CD4-positive, alpha-beta memory T cell (primary cell): ENCODE measurements at regions of chr10 and their contacts with region 1.

Region 1: DNA sequence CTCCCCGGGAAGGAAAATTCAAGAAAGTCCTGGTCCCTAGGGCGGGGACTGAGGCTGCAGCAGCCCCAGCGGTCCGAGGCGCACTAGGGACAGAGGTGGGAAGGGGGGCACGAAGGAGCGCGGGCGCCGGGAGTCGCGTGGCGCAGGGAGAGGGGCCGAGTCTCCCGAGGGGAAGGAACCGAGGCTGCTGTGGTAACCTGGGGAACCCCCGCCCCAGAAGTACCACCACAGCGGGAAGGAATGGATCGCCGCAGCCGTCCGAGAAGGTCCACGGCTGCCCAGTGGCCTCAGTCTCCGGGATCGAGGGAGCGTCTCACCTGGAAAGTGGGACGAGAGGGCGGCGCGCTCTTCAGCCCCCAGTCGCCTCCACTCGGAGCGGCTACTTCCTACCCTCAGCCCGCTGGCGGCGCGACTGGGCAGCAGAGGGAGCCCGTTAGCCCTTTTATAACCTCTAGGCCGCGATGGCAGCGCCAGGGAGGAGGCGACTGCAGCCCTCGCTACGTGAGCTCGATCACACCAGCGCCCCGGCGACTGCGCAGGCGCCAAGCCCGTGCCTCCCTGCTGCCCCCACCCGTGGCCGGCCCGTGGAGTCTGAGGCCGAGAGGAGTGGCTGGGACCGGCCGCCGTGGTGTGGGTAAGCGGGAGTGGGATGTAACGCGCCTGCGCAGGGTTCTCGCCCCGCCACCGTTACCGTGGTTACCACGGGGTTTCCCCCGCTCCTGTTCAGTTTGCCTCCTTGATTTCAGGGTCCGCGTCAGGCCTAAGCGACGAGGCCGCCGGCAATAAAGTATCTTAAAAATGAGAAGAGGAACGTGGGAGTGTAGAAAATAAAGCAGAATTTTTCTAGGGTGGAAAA is at the start of gene P4HA1:
- DNase-seq: peak; percentile 94 to 98 (median 95)
- H3K4me3 ChIP-seq: peak within 1 kb of the TSS; percentile 52 to 95
- H3K4me3 Mint-ChIP-seq: peak within 1 kb of the TSS; percentile 87 to 96 (median 94)
- H3K27ac ChIP-seq: peak within 1 kb of the TSS; percentile 87
- H3K27ac Mint-ChIP-seq: peak within 1 kb of the TSS; percentile 91 to 99 (median 96)
- H3K4me1 ChIP-seq: peaks cover 22% of the 10 kb centered on the region
- H3K4me1 Mint-ChIP-seq: peaks cover 13 to 53% (median 29%) of the 10 kb centered on the region in 4 donors
- H3K27me3 ChIP-seq: no peaks in the 10 kb centered on the region
- H3K27me3 Mint-ChIP-seq: no peaks in the 10 kb centered on the region
- total RNA-seq, gene P4HA1: 17.8 to 18.6 TPM

Region 2: DNA sequence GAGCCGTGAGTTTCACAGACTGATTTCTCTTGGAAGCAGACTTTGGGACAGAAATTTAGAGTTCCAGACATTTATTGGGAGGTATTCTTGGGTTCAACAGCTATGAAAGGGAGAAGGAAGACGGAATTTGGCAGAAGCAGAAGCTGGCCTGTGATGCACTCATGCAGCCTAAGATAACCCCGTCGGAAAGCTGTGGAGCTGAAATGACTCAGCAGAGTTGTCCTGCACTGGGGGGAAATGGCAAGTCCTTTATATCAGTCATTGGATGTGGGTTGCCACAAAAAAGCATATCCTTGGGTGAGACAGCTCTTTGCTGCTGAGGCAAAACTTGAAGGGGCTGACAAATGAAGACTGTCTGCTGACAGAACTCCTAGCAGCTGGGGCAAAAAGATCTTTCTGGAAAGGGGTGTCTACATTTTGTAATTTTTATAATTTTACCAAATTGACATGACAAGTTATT is 459.2 kb before region 1 on chr10:
- CTCF ChIA-PET with region 1: no interaction called
- POLR2A ChIA-PET with region 1: no interaction called
- intact Hi-C with region 1: no loop called
- DNase-seq: no peak
- H3K4me3 ChIP-seq: no peak overlapping the region
- H3K4me3 Mint-ChIP-seq: no peak overlapping the region
- H3K27ac ChIP-seq: no peak overlapping the region
- H3K27ac Mint-ChIP-seq: no peak overlapping the region
- H3K4me1 ChIP-seq: no peaks in the 10 kb centered on the region
- H3K4me1 Mint-ChIP-seq: no peaks in the 10 kb centered on the region
- H3K27me3 ChIP-seq: no peaks in the 10 kb centered on the region
- H3K27me3 Mint-ChIP-seq: peaks cover 3 to 7% of the 10 kb centered on the region in 2 donors

Region 3: DNA sequence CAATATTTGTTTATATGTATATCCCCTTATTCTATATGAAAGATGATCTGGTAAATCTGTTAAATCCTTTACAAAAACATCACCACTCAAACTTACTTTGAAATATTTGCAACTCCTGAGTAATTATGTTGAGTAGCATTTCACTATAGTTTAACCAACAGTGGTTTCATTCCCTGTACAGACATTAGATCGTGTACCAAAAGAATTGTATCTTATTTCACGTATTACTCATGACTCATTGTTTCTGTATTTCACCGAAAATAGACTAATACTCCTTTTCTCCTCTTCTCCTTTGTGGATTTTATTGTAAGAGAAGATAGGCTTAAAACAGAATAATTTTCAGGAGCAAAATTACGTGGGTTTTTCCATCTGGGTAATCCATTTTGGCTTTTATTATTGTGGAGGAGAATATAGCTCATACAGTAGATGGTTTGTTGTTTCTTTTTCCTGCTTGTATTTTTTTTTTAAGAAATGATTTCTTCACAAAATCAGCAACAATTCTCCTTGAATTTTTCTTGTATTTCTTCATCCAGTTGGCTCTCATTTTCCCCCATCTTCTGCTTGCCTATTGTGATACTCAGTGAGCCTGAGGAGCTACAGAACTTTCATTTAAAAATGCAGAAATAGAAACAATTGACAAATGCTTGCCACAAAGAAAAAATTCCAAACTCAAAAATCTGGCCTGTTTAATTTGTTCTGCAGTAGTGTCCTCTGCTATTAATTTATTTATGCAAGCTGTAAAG is 293.7 kb before region 1 on chr10:
- CTCF ChIA-PET with region 1: no interaction called
- POLR2A ChIA-PET with region 1: no interaction called
- intact Hi-C with region 1: no loop called
- DNase-seq: no peak
- H3K4me3 ChIP-seq: no peak overlapping the region
- H3K4me3 Mint-ChIP-seq: no peak overlapping the region
- H3K27ac ChIP-seq: no peak overlapping the region
- H3K27ac Mint-ChIP-seq: peak overlapping the region in 3 of 7 donors; percentile 20 to 67 (median 46)
- H3K4me1 ChIP-seq: peaks cover 16% of the 10 kb centered on the region
- H3K4me1 Mint-ChIP-seq: peaks cover 13 to 29% (median 16%) of the 10 kb centered on the region in 4 donors
- H3K27me3 ChIP-seq: no peaks in the 10 kb centered on the region
- H3K27me3 Mint-ChIP-seq: no peaks in the 10 kb centered on the region

Region 4: GRCh38 chr10:73110345-73110849 is 13.7 kb after region 1 on chr10 and contains the start of gene NUDT13:
- CTCF ChIA-PET with region 1: interaction called, 58 read pairs
- POLR2A ChIA-PET with region 1: interaction called, 51 read pairs
- intact Hi-C with region 1: loop called (anchors 1 kb)
- DNase-seq: peak; percentile 50 to 61 (median 54)
- H3K4me3 ChIP-seq: peak within 1 kb of the TSS; percentile 12 to 57
- H3K4me3 Mint-ChIP-seq: peak within 1 kb of the TSS; percentile 90 to 97 (median 93)
- H3K27ac ChIP-seq: peak within 1 kb of the TSS; percentile 43
- H3K27ac Mint-ChIP-seq: peak within 1 kb of the TSS; percentile 76 to 96 (median 91)
- H3K4me1 ChIP-seq: peaks cover 10% of the 10 kb centered on the region
- H3K4me1 Mint-ChIP-seq: peaks cover 4 to 15% (median 9%) of the 10 kb centered on the region in 4 donors
- H3K27me3 ChIP-seq: no peaks in the 10 kb centered on the region
- H3K27me3 Mint-ChIP-seq: no peaks in the 10 kb centered on the region
- total RNA-seq, gene NUDT13: 2.5 to 2.9 TPM

Region 5: GRCh38 chr10:73136627-73137026 is 40.0 kb after region 1 on chr10:
- CTCF ChIA-PET with region 1: interaction called, 37 read pairs
- POLR2A ChIA-PET with region 1: interaction called, 10 read pairs
- intact Hi-C with region 1: loop called (anchors 5 kb)
- DNase-seq: no peak
- H3K4me3 ChIP-seq: no peak overlapping the region
- H3K4me3 Mint-ChIP-seq: no peak overlapping the region
- H3K27ac ChIP-seq: no peak overlapping the region
- H3K27ac Mint-ChIP-seq: peak overlapping the region in 2 of 7 donors; percentile 4 to 60
- H3K4me1 ChIP-seq: no peaks in the 10 kb centered on the region
- H3K4me1 Mint-ChIP-seq: no peaks in the 10 kb centered on the region
- H3K27me3 ChIP-seq: no peaks in the 10 kb centered on the region
- H3K27me3 Mint-ChIP-seq: no peaks in the 10 kb centered on the region

Region 6: DNA sequence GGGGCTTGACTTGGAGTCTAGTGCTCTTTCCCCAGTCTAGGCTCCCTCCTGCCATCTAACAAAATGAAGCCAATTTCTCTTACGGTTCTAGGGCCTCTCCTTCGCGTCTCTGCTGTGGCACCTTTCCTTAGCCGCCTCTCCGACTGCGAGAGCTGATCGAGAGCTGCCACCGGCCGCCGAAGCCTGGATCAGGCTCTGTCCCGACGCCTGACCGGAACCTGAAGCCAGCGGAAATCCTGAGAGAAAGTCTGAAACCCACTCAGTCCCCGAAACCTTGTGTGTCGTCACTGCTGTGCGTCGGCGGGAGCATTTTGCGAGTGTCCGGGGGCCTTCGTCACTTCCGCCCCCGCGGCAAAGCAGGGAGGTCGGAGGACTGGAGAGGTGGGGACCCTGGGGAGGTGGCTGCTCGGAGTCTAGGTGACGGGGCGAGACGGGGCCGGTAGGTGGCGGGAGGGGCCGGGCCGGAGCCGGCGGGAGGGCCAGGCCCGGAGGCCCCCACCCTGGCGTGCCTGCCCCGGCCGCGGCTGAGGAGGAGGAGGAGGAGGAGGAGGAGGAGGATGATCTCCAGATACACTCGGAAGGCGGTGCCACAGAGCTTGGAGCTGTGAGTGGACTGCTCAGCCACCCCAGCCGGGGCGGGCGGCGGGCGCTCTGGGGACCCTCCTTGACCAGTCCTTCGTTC is 71.2 kb after region 1 on chr10 and contains the starts of genes ECD and FAM149B1:
- CTCF ChIA-PET with region 1: interaction called, 158 read pairs
- POLR2A ChIA-PET with region 1: interaction called, 8 read pairs
- intact Hi-C with region 1: loop called (anchors 1 kb)
- DNase-seq: peak; percentile 91 to 94 (median 92)
- H3K4me3 ChIP-seq: peak within 1 kb of the TSS; percentile 83 to 96
- H3K4me3 Mint-ChIP-seq: peak within 1 kb of the TSS; percentile 97 to 100 (median 100)
- H3K27ac ChIP-seq: peak within 1 kb of the TSS; percentile 93
- H3K27ac Mint-ChIP-seq: peak within 1 kb of the TSS; percentile 99 to 100 (median 100)
- H3K4me1 ChIP-seq: peaks cover 41% of the 10 kb centered on the region
- H3K4me1 Mint-ChIP-seq: peaks cover 33 to 48% (median 38%) of the 10 kb centered on the region in 4 donors
- H3K27me3 ChIP-seq: no peaks in the 10 kb centered on the region
- H3K27me3 Mint-ChIP-seq: no peaks in the 10 kb centered on the region
- total RNA-seq, gene ECD: 31.1 to 35.3 TPM
- total RNA-seq, gene FAM149B1: 18.1 to 20.5 TPM

Region 7: DNA sequence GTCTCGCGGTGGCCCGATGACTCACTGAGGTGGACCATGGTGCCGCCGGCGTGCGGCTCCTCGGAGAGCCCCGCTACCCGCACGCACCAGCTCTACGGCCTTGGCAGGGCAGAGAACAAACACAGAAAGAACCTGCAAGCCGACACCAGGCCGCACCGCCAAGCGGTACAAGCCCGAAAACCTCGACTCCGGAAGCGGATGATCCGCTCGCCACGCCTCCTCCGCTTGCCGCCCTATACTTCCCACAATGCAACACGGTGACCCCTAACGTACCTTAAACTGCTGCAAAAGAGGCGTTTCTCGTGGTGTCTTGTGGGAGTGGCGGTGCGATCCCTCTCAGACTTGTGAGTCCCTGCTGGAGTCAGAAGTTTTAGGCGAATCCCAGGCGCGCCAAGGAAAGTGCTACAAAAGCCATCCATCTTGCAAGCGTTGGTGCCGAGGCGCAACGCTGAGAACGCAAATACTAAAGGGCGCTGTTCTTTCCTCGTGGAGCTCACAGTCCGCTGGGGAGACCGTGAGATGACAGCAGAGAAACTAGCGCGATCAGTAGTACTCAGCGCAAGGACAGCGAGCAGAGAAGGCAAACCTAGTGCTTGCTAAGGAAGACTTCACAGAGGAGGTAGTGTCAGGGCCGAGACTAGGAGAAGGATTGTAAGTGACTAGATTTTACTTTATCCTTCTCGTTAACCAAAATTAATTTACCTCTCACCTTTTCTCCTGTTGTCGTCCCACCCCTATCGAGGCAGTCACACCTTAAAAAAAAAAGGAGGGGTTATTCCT is 156.0 kb after region 1 on chr10 and contains the start of gene MRPS16:
- CTCF ChIA-PET with region 1: interaction called, 4 read pairs
- POLR2A ChIA-PET with region 1: interaction called, 5 read pairs
- intact Hi-C with region 1: loop called (anchors 1 kb)
- DNase-seq: peak; percentile 92 to 97 (median 94)
- H3K4me3 ChIP-seq: peak within 1 kb of the TSS; percentile 49 to 99
- H3K4me3 Mint-ChIP-seq: peak within 1 kb of the TSS; percentile 95 to 100 (median 98)
- H3K27ac ChIP-seq: peak within 1 kb of the TSS; percentile 82
- H3K27ac Mint-ChIP-seq: peak within 1 kb of the TSS; percentile 94 to 99 (median 97)
- H3K4me1 ChIP-seq: peaks cover 33% of the 10 kb centered on the region
- H3K4me1 Mint-ChIP-seq: peaks cover 22 to 46% (median 34%) of the 10 kb centered on the region in 4 donors
- H3K27me3 ChIP-seq: no peaks in the 10 kb centered on the region
- H3K27me3 Mint-ChIP-seq: no peaks in the 10 kb centered on the region
- total RNA-seq, gene MRPS16: 44.9 to 47.1 TPM

Region 8: GRCh38 chr10:73413528-73414229 is 317.0 kb after region 1 on chr10 and contains the start of gene ANXA7:
- CTCF ChIA-PET with region 1: no interaction called
- POLR2A ChIA-PET with region 1: interaction called, 7 read pairs
- intact Hi-C with region 1: loop called (anchors 5 kb)
- DNase-seq: peak; percentile 85 to 93 (median 88)
- H3K4me3 ChIP-seq: peak within 1 kb of the TSS; percentile 59 to 82
- H3K4me3 Mint-ChIP-seq: peak within 1 kb of the TSS; percentile 91 to 99 (median 97)
- H3K27ac ChIP-seq: peak within 1 kb of the TSS; percentile 98
- H3K27ac Mint-ChIP-seq: peak within 1 kb of the TSS; percentile 88 to 98 (median 93)
- H3K4me1 ChIP-seq: peaks cover 46% of the 10 kb centered on the region
- H3K4me1 Mint-ChIP-seq: peaks cover 38 to 59% (median 48%) of the 10 kb centered on the region in 4 donors
- H3K27me3 ChIP-seq: no peaks in the 10 kb centered on the region
- H3K27me3 Mint-ChIP-seq: peaks cover 0 to 2% of the 10 kb centered on the region in 2 donors
- total RNA-seq, gene ANXA7: 103 to 111 TPM